ENCODE measurements at regions of chr10 and their contacts with region 1.

Region 1: DNA sequence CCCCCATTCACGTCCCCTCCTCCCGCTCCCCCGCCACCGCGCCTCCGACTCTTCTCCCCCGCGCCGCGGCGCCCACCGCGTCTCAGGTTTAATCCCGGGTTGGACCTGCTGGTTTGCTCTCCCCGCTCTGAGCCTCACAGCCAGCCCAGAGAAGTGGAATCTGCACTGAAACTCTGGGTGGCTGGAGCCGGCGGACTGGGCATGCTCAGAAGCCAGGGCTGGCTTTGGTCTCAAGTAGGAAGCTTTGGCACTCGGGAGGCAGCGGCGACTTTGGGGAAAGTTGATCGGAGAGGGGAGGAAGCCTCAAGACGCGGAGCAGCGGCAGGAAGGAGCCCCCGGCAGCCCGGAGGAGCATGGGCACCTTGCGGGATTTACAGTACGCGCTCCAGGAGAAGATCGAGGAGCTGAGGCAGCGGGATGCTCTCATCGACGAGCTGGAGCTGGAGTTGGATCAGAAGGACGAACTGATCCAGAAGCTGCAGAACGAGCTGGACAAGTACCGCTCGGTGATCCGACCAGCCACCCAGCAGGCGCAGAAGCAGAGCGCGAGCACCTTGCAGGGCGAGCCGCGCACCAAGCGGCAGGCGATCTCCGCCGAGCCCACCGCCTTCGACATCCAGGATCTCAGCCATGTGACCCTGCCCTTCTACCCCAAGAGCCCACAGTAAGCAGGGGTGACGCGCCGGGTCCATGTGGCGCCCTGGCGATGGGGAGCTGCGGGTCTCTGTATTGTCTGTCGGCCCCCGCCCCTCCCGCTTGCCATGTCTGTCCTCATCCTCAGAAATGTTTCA is at the start of gene PRKG1:
- DNase-seq: peak; percentile 91
- total RNA-seq, gene PRKG1: 94.5 to 96.0 TPM

Region 2: DNA sequence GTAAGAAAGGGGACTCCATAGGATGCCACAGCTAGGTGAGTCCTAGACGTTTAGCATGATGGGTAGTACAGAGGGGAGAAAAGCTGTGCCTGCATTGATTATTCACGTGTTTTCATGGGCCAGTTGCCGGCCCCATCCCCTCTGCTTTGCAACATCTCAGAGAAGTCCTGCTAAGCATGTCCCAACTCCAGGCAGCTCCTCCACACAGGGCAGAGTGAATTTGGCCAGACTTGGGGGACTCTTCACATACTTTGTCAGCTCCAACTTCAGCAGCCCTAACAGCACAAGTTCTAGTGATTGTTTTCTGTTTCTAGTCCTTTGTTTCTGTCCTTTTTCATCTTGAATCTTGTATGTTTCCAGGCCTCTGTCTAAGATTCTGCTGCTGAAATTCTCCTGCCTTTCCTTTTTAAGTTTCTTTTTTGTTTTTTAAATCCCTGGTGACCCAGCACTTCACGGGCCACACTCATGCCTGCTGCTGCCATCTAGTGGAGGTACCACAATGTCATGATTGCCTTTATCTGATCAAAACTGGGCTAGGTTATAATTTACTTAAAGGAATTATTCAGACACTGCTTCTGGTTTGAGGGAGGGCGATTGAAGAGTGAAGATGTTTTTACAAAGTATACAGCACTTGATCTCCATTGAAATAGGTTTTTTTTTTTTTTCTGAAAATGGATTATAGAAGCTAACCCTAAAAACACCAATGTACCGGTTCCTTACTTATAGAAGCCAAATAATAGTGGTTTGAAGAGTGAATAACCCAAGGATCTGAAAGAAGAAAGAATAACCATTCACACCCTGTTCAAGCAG is 348.1 kb after region 1 on chr10:
- intact Hi-C with region 1: loop called in 1 of 2 experiments (anchors 10 kb)
- DNase-seq: no peak

Region 3: DNA sequence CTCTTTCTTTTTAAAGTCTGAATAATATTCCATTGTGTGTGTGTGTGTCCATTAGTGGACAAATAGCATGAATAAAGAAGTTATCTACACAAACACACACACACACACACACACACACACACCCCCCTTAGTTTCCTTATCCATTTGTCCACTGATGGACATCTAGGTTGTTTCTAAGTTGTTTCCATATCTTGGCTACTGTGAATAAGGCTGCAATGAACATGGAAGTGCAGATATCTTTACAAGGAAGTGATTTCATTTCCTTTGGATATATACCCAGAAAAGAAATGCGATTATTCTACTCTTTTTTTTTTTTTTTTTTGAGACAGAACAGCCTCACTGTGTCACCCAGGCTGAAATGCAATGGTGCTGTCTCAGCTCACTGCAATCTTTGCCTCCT is 1584.7 kb after region 1 on chr10:
- intact Hi-C with region 1: no loop called
- DNase-seq: no peak